ENCODE measurements at regions of chr14 and their contacts with region 1.

Region 1: GRCh38 chr14:99802301-99803105 is 9.3 kb downstream of the EML1 start:
- DNase-seq: no peak
- ATAC-seq: peak in 1 of 2 donors; percentile 57

Region 2: GRCh38 chr14:99879401-99880295 is 77.1 kb after region 1 on chr14:
- intact Hi-C with region 1: loop called in 1 of 2 experiments (anchors 5 kb)
- DNase-seq: no peak
- ATAC-seq: peak in 1 of 2 donors; percentile 83

Measured in left cardiac atrium (tissue), 4 donors.